Gastrocnemius medialis (tissue), 4 donors: ENCODE measurements at regions of chr4 and their contacts with region 1.

Region 1: GRCh38 chr4:139554893-139555704 is 920 bp downstream of the SETD7 start:
- DNase-seq: peak; percentile 90 to 92
- ATAC-seq: peak; percentile 67 to 71
- H3K4me3 ChIP-seq: peak overlapping the region; percentile 65 to 98 (median 87)
- H3K27ac ChIP-seq: peak overlapping the region; percentile 96 to 99 (median 98)
- H3K4me1 ChIP-seq: peaks cover 45 to 51% of the 10 kb centered on the region in 2 donors
- H3K27me3 ChIP-seq: no peaks in the 10 kb centered on the region
- CTCF ChIP-seq: peak in 1 of 5 experiments; percentile 7
- POLR2A ChIP-seq: peak; percentile 56 to 78

Region 2: DNA sequence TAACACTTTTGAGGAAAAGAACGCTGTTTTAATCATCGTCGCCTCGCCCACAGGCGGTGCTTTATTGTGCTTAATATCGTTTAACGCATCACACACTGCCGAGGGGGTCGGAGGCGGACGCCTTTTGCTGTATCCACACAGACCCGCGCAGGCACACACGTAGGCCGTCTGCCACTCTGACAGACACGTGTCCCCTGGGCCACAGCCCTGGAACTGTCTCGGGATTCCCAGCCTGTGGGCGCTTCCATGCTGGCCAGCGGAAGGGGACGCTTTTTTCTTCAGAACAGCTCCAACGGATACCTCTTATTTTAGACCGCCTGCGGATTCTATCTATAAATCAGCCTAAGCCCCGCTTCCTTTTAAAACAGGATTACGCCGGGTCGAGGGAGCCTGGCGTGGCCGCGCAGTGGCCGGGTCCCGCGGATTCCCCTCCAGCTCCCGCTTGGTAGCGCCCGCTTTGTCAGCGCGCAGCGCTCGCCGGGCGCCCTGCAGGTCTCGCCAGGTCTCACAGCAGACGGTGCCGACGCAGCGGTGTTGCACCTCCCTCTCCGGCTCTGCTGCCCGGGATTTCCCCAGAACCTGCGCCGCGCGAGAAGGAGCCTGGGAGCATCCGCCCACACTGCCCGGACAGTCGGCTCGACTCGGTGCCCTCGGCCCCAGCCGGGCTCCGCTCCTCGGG is 539.7 kb before region 1 on chr4 and contains the start of gene NOCT:
- in situ Hi-C with region 1: no loop called
- intact Hi-C with region 1: loop called (anchors 2 kb)
- DNase-seq: peak; percentile 82 to 90
- ATAC-seq: peak; percentile 90 to 92
- H3K4me3 ChIP-seq: peak within 1 kb of the TSS; percentile 61 to 83 (median 70)
- H3K27ac ChIP-seq: peak within 1 kb of the TSS; percentile 87 to 95 (median 93)
- H3K4me1 ChIP-seq: peaks cover 34 to 39% of the 10 kb centered on the region in 2 donors
- H3K27me3 ChIP-seq: no peaks in the 10 kb centered on the region
- CTCF ChIP-seq: peak in 2 of 5 experiments; percentile 40 to 53
- POLR2A ChIP-seq: peak; percentile 87 to 97
- total RNA-seq, gene NOCT: 4.8 to 18.5 (median 9.2) TPM

Region 3: GRCh38 chr4:139301113-139301820 is 253.8 kb before region 1 on chr4 and contains the start of gene NAA15:
- in situ Hi-C with region 1: no loop called
- intact Hi-C with region 1: loop called (anchors 2 kb)
- DNase-seq: peak; percentile 96 to 98
- ATAC-seq: peak; percentile 79 to 80
- H3K4me3 ChIP-seq: peak within 1 kb of the TSS; percentile 71 to 95 (median 86)
- H3K27ac ChIP-seq: peak within 1 kb of the TSS; percentile 94 to 98 (median 96)
- H3K4me1 ChIP-seq: peaks cover 50 to 60% of the 10 kb centered on the region in 2 donors
- H3K27me3 ChIP-seq: no peaks in the 10 kb centered on the region
- CTCF ChIP-seq: no peak
- POLR2A ChIP-seq: peak; percentile 89 to 95
- total RNA-seq, gene NAA15: 25.0 to 48.8 (median 37.2) TPM

Region 4: GRCh38 chr4:139453371-139454110 is 101.6 kb before region 1 on chr4:
- in situ Hi-C with region 1: no loop called
- intact Hi-C with region 1: loop called (anchors 1 kb)
- DNase-seq: peak; percentile 96
- ATAC-seq: peak; percentile 95
- H3K4me3 ChIP-seq: peak overlapping the region; percentile 69 to 98 (median 80)
- H3K27ac ChIP-seq: peak overlapping the region; percentile 88 to 96 (median 95)
- H3K4me1 ChIP-seq: peaks cover 30 to 38% of the 10 kb centered on the region in 2 donors
- H3K27me3 ChIP-seq: no peaks in the 10 kb centered on the region
- CTCF ChIP-seq: peak in 2 of 5 experiments; percentile 6 to 9
- POLR2A ChIP-seq: no peak

Region 5: GRCh38 chr4:139509727-139510410 is 45.2 kb before region 1 on chr4:
- in situ Hi-C with region 1: no loop called
- intact Hi-C with region 1: loop called (anchors 5 kb)
- DNase-seq: no peak
- ATAC-seq: peak; percentile 36 to 69
- H3K4me3 ChIP-seq: no peak overlapping the region
- H3K27ac ChIP-seq: peak overlapping the region; percentile 63 to 83 (median 74)
- H3K4me1 ChIP-seq: peaks cover 48 to 55% of the 10 kb centered on the region in 2 donors
- H3K27me3 ChIP-seq: no peaks in the 10 kb centered on the region
- CTCF ChIP-seq: peak in 4 of 5 experiments; percentile 28 to 59 (median 42)
- POLR2A ChIP-seq: no peak